Naive thymus-derived CD8-positive, alpha-beta T cell (primary cell): ENCODE measurements at regions of chr12 and their contacts with region 1.

Region 1: DNA sequence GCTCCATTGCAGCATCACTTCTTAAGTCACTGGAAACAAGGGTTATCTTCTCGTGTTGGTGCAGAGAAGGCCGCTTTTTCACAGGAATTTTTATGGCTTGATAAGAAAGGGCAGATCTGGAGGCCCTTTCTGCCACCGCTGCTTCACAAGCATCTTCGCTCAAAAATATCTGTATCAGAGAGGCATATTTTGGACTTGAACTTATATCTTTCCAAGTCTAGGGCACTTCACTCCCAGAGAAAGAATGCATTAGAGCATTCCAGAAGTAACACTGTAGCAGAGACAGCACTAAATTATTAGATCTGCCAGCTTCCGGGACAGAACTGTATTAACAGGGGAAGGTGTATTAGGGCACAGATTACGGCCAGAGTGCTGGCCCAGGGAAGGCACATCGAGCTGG is 151.7 kb upstream of the AMIGO2 start:
- DNase-seq: no peak
- ATAC-seq: no peak
- H3K4me3 Mint-ChIP-seq: peak overlapping the region in 6 of 10 donors; percentile 5 to 56 (median 32)
- H3K27ac Mint-ChIP-seq: peak overlapping the region; percentile 4 to 98 (median 70)
- H3K4me1 Mint-ChIP-seq: peaks cover 21 to 80% (median 61%) of the 10 kb centered on the region in 4 donors
- H3K27me3 Mint-ChIP-seq: no peaks in the 10 kb centered on the region

Region 2: DNA sequence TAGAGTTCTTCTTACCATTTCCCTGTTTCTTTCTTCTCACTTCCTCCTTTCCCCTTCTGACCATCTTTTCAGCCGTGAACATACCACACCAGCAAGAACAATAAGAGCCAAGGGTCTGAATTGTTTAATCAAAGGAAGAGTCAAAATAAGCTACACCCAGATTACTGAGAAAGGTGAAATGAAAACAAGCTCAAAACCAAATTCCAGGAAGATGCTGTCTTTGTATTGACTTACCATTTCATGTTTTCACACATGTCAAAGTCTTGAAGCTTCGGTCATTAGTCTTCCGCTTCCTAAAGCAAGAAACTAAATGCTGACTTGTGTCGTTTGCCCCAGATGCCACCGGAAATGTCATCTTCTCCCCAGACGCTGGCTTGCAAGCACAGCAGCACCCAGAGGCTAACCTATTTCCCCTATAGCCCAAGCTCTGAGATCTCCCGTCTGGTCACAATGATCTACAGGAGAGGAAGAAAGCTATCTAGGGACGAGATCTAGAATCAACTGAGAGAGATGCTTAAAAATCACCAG is 15.2 kb before region 1 on chr12:
- POLR2A ChIA-PET with region 1: interaction called, 12 read pairs
- DNase-seq: peak in 9 of 10 donors; percentile 50 to 84 (median 70)
- ATAC-seq: peak; percentile 43 to 69
- H3K4me3 Mint-ChIP-seq: peak overlapping the region; percentile 95 to 99 (median 98)
- H3K27ac Mint-ChIP-seq: peak overlapping the region; percentile 93 to 99 (median 96)
- H3K4me1 Mint-ChIP-seq: peaks cover 9 to 66% (median 23%) of the 10 kb centered on the region in 4 donors
- H3K27me3 Mint-ChIP-seq: no peaks in the 10 kb centered on the region